Mammary epithelial cell (primary cell): ENCODE measurements at regions of chr1 and their contacts with region 1.

Region 1: DNA sequence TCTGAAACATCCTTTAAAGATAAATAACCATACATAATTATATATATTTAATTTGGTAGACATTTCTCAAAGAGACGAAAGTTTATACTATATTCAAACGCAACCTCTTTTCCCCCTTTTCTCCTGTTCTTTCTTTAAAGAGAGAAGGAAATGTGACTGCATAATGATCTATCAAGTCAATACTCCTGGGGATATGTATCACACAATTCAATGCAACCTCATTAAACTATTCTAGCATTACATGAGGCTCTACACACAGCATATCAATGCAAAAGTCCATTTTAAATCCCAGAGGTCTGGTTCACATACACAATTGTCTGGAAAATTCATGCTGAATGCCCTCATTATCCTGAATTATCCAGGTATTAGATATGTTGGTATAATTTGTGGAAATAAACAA is 330.7 kb downstream of the LMX1A start:
- DNase-seq: no peak
- H3K4me3 ChIP-seq: no peak overlapping the region
- H3K27ac ChIP-seq: no peak overlapping the region
- H3K4me1 ChIP-seq: no peaks in the 10 kb centered on the region
- H3K27me3 ChIP-seq: peaks cover 2% of the 10 kb centered on the region
- CTCF ChIP-seq: no peak

Region 2: GRCh38 chr1:164949771-164950471 is 75.9 kb before region 1 on chr1:
- CTCF ChIA-PET with region 1: no interaction called
- dilution Hi-C with region 1: loop called (anchors 5 kb)
- in situ Hi-C with region 1: no loop called
- intact Hi-C with region 1: no loop called
- DNase-seq: no peak
- H3K4me3 ChIP-seq: no peak overlapping the region
- H3K27ac ChIP-seq: no peak overlapping the region
- H3K4me1 ChIP-seq: no peaks in the 10 kb centered on the region
- H3K27me3 ChIP-seq: peaks cover 1% of the 10 kb centered on the region
- CTCF ChIP-seq: no peak